Common myeloid progenitor, CD34-positive (primary cell): ENCODE measurements at regions of chr17 and their contacts with region 1.

Region 1: GRCh38 chr17:18141210-18141803 is 32.8 kb downstream of the MYO15A start:
- DNase-seq: peak; percentile 65 to 82 (median 71)
- H3K4me3 ChIP-seq: no peak overlapping the region
- H3K27ac ChIP-seq: no peak overlapping the region
- H3K4me1 ChIP-seq: no peaks in the 10 kb centered on the region
- H3K27me3 ChIP-seq: no peaks in the 10 kb centered on the region

Region 2: DNA sequence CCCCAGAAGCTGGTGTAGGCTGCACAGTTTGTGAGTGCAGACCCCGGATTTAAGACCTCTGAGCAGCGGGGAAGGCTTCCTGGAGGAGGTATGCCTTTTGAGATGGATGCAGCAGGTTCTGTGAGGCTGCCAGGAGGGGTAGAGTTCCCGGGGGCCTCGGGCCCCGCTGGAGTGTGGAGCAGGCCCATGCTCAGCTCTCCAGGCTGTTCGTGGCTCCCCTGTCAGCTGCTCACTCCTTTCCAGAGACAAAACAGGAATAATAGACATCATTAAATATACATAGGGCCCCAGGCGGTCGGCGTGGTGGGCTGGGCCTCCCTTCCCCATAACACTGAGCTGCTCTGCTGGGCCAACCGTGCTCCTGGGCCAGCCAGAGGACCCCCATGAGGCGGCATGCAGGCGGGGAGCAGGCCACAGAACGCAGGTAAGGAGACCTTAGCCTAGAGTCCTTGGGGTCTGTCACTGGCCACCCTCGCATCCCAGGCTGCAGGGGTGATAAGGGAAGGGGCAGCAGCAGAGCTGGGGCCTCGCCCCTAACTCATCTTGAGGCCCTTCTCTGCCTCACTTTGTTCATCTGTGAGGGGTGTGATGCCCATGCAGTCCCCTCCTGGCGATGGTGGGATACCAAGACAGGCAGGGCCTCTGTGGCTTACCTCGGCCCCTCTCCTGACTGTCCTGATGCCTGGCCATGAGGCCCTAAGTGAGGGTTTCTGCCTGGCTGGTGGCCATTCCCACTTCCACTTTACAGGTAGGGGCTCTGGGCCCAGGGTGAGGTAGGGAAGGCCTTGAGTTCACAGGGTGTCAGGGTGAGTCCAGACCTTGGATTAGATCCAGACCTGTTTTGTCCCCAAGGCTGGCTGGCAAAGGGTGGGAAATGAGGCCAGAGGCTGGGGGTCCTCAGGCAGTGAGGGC is 32.6 kb before region 1 on chr17 and contains the start of gene MYO15A:
- CTCF ChIA-PET with region 1: no interaction called
- POLR2A ChIA-PET with region 1: no interaction called
- DNase-seq: no peak
- H3K4me3 ChIP-seq: no peak within 1 kb of the TSS
- H3K27ac ChIP-seq: no peak within 1 kb of the TSS
- H3K4me1 ChIP-seq: peaks cover 0 to under 1% (median 0%) of the 10 kb centered on the region in 4 experiments
- H3K27me3 ChIP-seq: no peaks in the 10 kb centered on the region

Region 3: GRCh38 chr17:18153749-18154161 is 12.4 kb after region 1 on chr17:
- CTCF ChIA-PET with region 1: interaction called, 28 read pairs
- POLR2A ChIA-PET with region 1: no interaction called
- DNase-seq: peak; percentile 65 to 79 (median 78)
- H3K4me3 ChIP-seq: peak overlapping the region in 6 of 7 experiments; percentile 47 to 86 (median 60)
- H3K27ac ChIP-seq: no peak overlapping the region
- H3K4me1 ChIP-seq: peaks cover 0 to 20% (median 17%) of the 10 kb centered on the region in 4 experiments
- H3K27me3 ChIP-seq: no peaks in the 10 kb centered on the region

Region 4: GRCh38 chr17:18203308-18203707 is 62.0 kb after region 1 on chr17:
- CTCF ChIA-PET with region 1: interaction called, 10 read pairs
- POLR2A ChIA-PET with region 1: no interaction called
- DNase-seq: no peak
- H3K4me3 ChIP-seq: no peak overlapping the region
- H3K27ac ChIP-seq: no peak overlapping the region
- H3K4me1 ChIP-seq: no peaks in the 10 kb centered on the region
- H3K27me3 ChIP-seq: no peaks in the 10 kb centered on the region

Region 5: DNA sequence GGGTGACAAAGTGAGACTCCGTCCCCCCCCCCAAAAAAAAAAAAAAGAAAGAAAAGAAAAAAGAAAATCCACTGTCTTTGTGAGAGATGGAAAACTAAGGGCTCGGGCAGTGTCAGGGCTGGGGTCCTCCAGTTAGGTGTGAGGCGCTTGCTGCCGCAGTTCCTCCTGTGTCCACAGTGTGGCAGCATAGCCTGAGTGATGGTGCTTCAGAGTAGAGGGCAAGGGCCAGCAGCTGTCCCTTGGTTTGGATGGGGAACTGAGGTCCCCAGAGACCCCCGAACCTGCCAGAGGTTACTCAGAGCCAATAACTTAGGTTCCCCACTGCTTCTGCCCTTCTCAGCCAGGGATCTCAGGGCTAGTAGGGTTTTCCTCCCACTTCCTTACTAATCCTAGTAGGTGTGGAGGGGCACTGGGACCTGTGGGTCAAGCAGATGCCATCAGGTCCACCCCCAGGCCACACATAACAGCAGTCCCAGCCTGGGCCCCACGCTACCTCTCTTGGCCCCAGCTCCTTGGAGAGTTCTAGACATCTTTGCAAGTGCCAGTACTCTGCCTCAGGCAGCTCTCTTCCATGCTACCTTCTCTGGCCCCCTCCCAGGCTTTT is 76.2 kb after region 1 on chr17:
- CTCF ChIA-PET with region 1: interaction called, 18 read pairs
- POLR2A ChIA-PET with region 1: no interaction called
- DNase-seq: peak; percentile 39 to 72 (median 63)
- H3K4me3 ChIP-seq: no peak overlapping the region
- H3K27ac ChIP-seq: no peak overlapping the region
- H3K4me1 ChIP-seq: peaks cover 0 to 2% (median 0%) of the 10 kb centered on the region in 4 experiments
- H3K27me3 ChIP-seq: no peaks in the 10 kb centered on the region